ENCODE measurements at regions of chr7 and their contacts with region 1.

Region 1: DNA sequence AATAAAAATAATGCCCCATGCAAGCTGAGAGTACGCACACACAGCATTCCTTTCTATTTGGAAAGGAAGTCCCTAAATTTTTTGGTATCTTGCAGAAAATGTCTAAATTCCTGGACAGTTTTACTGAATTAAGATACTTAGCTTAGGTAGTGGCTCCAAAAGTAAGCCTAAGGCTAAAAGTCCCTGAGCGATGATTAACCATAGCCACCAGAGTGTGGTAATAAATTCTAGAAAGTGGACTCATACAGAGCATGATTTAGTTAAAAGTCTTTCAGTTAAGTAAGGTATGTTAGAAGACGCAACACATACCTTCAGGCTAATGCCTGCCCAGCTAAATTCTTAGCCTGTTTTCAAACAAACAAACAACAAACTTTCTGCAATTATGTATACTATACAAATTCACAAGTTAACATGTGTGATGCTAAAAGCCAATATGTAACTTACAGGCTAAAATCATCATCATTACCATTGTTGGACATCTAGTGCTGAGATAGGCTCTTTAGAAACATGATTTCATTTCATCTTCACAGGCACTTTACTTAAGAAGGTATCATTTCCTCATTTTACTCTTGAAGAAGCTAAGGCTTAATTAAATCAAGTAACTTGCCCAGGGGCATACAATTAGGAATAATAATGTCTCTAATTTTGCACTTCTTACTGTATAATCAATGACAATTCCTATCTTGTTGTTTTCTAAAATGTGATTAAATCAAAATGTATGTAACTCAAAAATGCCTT is 261.4 kb upstream of the YAE1 start:
- DNase-seq: no peak
- ATAC-seq: peak; percentile 89
- H3K4me3 ChIP-seq: no peak overlapping the region
- H3K27ac ChIP-seq: no peak overlapping the region
- H3K4me1 ChIP-seq: no peaks in the 10 kb centered on the region
- H3K27me3 ChIP-seq: no peaks in the 10 kb centered on the region; a peak in 1 of 4 replicates
- CTCF ChIP-seq: no peak
- EP300 ChIP-seq: 0 out of 4 replicates have a peak, but pooled peaks of 1 of the 2 experiments have one; percentile 16
- POLR2A ChIP-seq: no peak
- RAD21 ChIP-seq: no peak

Region 2: DNA sequence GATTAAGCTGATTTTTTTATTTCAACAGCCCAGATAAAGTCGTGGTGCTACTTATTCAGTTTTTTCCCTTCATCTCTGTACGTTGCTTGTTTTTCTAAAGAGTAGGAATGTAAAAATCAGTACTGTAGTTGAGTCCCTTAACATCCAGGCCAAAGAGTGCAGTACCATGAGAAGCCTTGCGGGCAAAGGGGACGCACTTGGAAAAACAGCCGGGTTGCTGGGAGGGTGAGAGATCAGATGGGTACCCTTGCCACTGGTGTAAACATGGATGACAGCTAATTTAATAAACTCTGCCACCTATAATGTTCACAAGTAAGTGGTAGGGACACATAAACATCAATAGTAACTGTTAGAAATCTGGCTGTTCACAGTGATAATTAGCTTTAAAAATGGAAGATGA is 151.2 kb before region 1 on chr7:
- CTCF ChIA-PET with region 1: no interaction called
- POLR2A ChIA-PET with region 1: no interaction called
- RAD21 ChIA-PET with region 1: no interaction called
- SMC1A ChIA-PET with region 1: no interaction called
- in situ Hi-C with region 1: no loop called
- intact Hi-C with region 1: no loop called
- DNase-seq: no peak
- ATAC-seq: no peak
- H3K4me3 ChIP-seq: no peak overlapping the region
- H3K27ac ChIP-seq: no peak overlapping the region
- H3K4me1 ChIP-seq: no peaks in the 10 kb centered on the region
- H3K27me3 ChIP-seq: no peaks in the 10 kb centered on the region
- CTCF ChIP-seq: no peak
- EP300 ChIP-seq: no peak
- POLR2A ChIP-seq: no peak
- RAD21 ChIP-seq: no peak

Region 3: GRCh38 chr7:39288303-39288702 is 16.5 kb before region 1 on chr7:
- CTCF ChIA-PET with region 1: interaction called, 5 read pairs
- POLR2A ChIA-PET with region 1: interaction called, 3 read pairs
- RAD21 ChIA-PET with region 1: interaction called, 4 read pairs
- SMC1A ChIA-PET with region 1: interaction called, 10 read pairs
- in situ Hi-C with region 1: no loop called
- intact Hi-C with region 1: no loop called
- DNase-seq: no peak
- ATAC-seq: no peak
- H3K4me3 ChIP-seq: no peak overlapping the region
- H3K27ac ChIP-seq: no peak overlapping the region
- H3K4me1 ChIP-seq: no peaks in the 10 kb centered on the region
- H3K27me3 ChIP-seq: no peaks in the 10 kb centered on the region
- CTCF ChIP-seq: no peak
- EP300 ChIP-seq: no peak
- POLR2A ChIP-seq: no peak
- RAD21 ChIP-seq: no peak

Region 4: GRCh38 chr7:39321909-39322498 is 17.2 kb after region 1 on chr7:
- CTCF ChIA-PET with region 1: interaction called, 14 read pairs
- POLR2A ChIA-PET with region 1: interaction called, 3 read pairs
- RAD21 ChIA-PET with region 1: interaction called, 7 read pairs
- SMC1A ChIA-PET with region 1: interaction called, 6 read pairs
- in situ Hi-C with region 1: no loop called
- intact Hi-C with region 1: no loop called
- DNase-seq: no peak
- ATAC-seq: peak; percentile 87
- H3K4me3 ChIP-seq: no peak overlapping the region
- H3K27ac ChIP-seq: no peak overlapping the region
- H3K4me1 ChIP-seq: no peaks in the 10 kb centered on the region
- H3K27me3 ChIP-seq: no peaks in the 10 kb centered on the region
- CTCF ChIP-seq: no peak
- EP300 ChIP-seq: no peak
- POLR2A ChIP-seq: no peak
- RAD21 ChIP-seq: no peak

Region 5: GRCh38 chr7:39360038-39360437 is 55.2 kb after region 1 on chr7:
- CTCF ChIA-PET with region 1: interaction called, 3 read pairs
- POLR2A ChIA-PET with region 1: no interaction called
- RAD21 ChIA-PET with region 1: interaction called, 5 read pairs
- SMC1A ChIA-PET with region 1: interaction called, 4 read pairs
- in situ Hi-C with region 1: no loop called
- intact Hi-C with region 1: loop called (anchors 5 kb)
- DNase-seq: no peak
- ATAC-seq: peak; percentile 66
- H3K4me3 ChIP-seq: no peak overlapping the region
- H3K27ac ChIP-seq: no peak overlapping the region
- H3K4me1 ChIP-seq: no peaks in the 10 kb centered on the region
- H3K27me3 ChIP-seq: no peaks in the 10 kb centered on the region
- CTCF ChIP-seq: no peak
- EP300 ChIP-seq: no peak
- POLR2A ChIP-seq: no peak
- RAD21 ChIP-seq: no peak